AG04450 (cell line): ENCODE measurements at regions of chr11 and their contacts with region 1.

Region 1: DNA sequence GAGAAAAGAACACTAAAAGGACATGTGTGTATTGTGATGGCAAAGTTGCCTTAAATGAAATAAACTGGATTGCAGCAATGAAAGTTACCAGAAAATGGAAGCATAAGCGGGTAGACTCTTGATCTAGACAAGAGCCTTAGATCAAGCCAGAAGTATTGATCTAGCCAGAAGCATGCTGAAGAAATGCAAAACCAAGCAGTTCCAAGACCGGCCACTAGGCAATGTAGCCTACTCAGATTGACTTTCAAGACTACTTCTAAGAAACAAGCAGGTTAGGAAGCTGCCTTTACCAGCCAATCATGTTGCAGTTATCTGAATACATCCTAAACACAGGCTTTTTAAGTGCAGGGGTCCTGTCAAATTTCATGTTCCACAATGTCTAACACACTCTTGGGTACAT is 54.6 kb downstream of the KCNA4 start:
- DNase-seq: no peak
- H3K4me3 ChIP-seq: no peak overlapping the region
- H3K27ac ChIP-seq: no peak overlapping the region
- H3K27me3 ChIP-seq: no peaks in the 10 kb centered on the region
- CTCF ChIP-seq: peak; percentile 32

Region 2: GRCh38 chr11:29978549-29978948 is 16.3 kb after region 1 on chr11:
- CTCF ChIA-PET with region 1: interaction called, 10 read pairs
- POLR2A ChIA-PET with region 1: no interaction called
- DNase-seq: no peak
- H3K4me3 ChIP-seq: no peak overlapping the region
- H3K27ac ChIP-seq: no peak overlapping the region
- H3K27me3 ChIP-seq: no peaks in the 10 kb centered on the region
- CTCF ChIP-seq: no peak

Region 3: GRCh38 chr11:30172883-30173311 is 210.7 kb after region 1 on chr11:
- CTCF ChIA-PET with region 1: no interaction called
- POLR2A ChIA-PET with region 1: no interaction called
- DNase-seq: no peak
- H3K4me3 ChIP-seq: no peak overlapping the region
- H3K27ac ChIP-seq: no peak overlapping the region
- H3K27me3 ChIP-seq: no peaks in the 10 kb centered on the region
- CTCF ChIP-seq: no peak